PC-3 (cell line): ENCODE measurements at regions of chr7 and their contacts with region 1.

Region 1: DNA sequence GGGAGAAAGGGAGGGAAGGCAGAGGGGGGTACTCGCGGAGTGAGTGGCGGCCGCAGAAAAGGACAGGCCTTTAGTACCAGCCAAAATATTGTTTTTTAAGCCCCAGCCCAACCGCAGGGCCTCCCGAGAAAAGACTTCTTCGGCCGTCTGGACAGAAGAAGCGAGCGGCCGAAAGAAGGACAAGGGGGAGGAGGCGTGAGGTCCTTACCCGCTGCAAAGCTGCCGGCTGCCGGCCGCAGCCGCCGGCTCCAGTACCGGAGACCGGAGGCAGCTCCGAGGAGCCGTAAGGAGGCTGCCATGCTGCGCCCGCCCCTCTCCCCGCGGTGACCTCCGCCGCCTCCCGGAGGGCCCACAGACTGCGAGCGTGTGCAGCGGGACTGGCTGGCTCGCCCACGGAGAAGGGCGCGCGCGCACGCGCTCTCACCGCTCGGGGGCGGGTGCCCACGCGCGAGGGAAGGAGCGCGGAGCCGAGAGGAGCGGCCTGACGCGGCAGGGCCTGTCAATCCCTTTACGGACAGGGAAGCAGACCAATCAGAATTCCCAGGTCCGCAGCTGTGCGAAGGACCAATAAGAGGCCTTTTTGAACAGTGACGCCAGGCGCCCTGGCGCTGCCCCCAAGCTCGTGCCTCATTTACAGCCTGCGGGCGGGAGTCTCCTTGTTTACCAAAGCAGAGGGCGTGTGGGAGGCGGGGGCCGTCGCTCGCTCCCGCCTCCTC is at the start of gene HIBADH:
- DNase-seq: peak; percentile 99
- ATAC-seq: peak; percentile 98
- H3K4me3 ChIP-seq: peak within 1 kb of the TSS; percentile 81
- H3K27ac ChIP-seq: peak within 1 kb of the TSS; percentile 60
- H3K4me1 ChIP-seq: 0 out of 2 replicates have a peak, but pooled peaks cover 7% of the 10 kb centered on the region
- H3K27me3 ChIP-seq: no peaks in the 10 kb centered on the region
- CTCF ChIP-seq: no peak
- total RNA-seq, gene HIBADH: 43.7 and 45.8 TPM in 2 replicates

Region 2: GRCh38 chr7:27677912-27678612 is 15.4 kb after region 1 on chr7:
- CTCF ChIA-PET with region 1: interaction called, 3 read pairs
- POLR2A ChIA-PET with region 1: no interaction called
- intact Hi-C with region 1: loop called (anchors 1 kb)
- DNase-seq: peak; percentile 95
- ATAC-seq: peak; percentile 96
- H3K4me3 ChIP-seq: peak overlapping the region; percentile 34; the same call in 1 of the 2 replicates
- H3K27ac ChIP-seq: peak overlapping the region; percentile 100
- H3K4me1 ChIP-seq: peaks cover 31% of the 10 kb centered on the region
- H3K27me3 ChIP-seq: no peaks in the 10 kb centered on the region
- CTCF ChIP-seq: no peak